Calu3 (cell line): ENCODE measurements at regions of chr17 and their contacts with region 1.

Region 1: GRCh38 chr17:78970834-78971773 is 8.6 kb downstream of the LGALS3BP start:
- DNase-seq: peak; percentile 79
- H3K4me3 Mint-ChIP-seq: no peak overlapping the region
- H3K27ac Mint-ChIP-seq: peak overlapping the region; percentile 66
- H3K4me1 Mint-ChIP-seq: peaks cover 18% of the 10 kb centered on the region
- H3K27me3 Mint-ChIP-seq: no peaks in the 10 kb centered on the region
- CTCF ChIP-seq: peak; percentile 85

Region 2: GRCh38 chr17:78865682-78866390 is 105.3 kb before region 1 on chr17:
- CTCF ChIA-PET with region 1: interaction called, 15 read pairs
- intact Hi-C with region 1: loop called (anchors 5 kb)
- DNase-seq: peak; percentile 81
- H3K4me3 Mint-ChIP-seq: no peak overlapping the region
- H3K27ac Mint-ChIP-seq: no peak overlapping the region
- H3K4me1 Mint-ChIP-seq: peaks cover 29% of the 10 kb centered on the region
- H3K27me3 Mint-ChIP-seq: no peaks in the 10 kb centered on the region
- CTCF ChIP-seq: peak; percentile 88